ENCODE measurements at regions of chr17 and their contacts with region 1.

Region 1: GRCh38 chr17:65100316-65101140 is 36.6 kb upstream of the RGS9 start:
- DNase-seq: peak; percentile 91
- ATAC-seq: peak; percentile 70
- H3K4me3 ChIP-seq: peak overlapping the region; percentile 76
- H3K27ac ChIP-seq: peak overlapping the region; percentile 92
- H3K4me1 ChIP-seq: peaks cover 44% of the 10 kb centered on the region
- H3K27me3 ChIP-seq: no peaks in the 10 kb centered on the region
- CTCF ChIP-seq: peak; percentile 92

Region 2: GRCh38 chr17:64968652-64969501 is 131.7 kb before region 1 on chr17:
- CTCF ChIA-PET with region 1: interaction called, 6 read pairs
- POLR2A ChIA-PET with region 1: no interaction called
- intact Hi-C with region 1: loop called (anchors 1 kb)
- DNase-seq: no peak
- ATAC-seq: no peak
- H3K4me3 ChIP-seq: no peak overlapping the region
- H3K27ac ChIP-seq: no peak overlapping the region
- H3K4me1 ChIP-seq: peaks cover 24% of the 10 kb centered on the region
- H3K27me3 ChIP-seq: no peaks in the 10 kb centered on the region
- CTCF ChIP-seq: no peak

Region 3: DNA sequence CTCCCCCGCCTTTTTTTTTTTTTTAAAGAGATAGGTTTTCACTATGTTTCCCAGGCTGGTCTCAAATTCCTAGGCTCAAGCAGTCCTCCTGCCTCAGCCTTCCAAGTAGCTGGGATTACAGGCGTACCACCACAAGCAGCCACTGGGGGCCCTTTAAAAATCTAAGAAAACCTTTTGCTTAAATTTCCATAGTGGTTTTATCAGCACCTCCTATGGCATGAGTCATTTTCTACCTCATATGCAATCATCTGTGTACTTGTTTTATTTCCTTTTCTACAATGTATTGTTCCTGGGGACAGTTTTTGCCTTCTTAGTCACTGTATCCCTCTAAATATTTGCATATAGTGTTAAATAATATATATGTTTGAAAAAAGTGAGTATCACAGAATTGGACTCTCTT is 73.2 kb before region 1 on chr17:
- CTCF ChIA-PET with region 1: interaction called, 3 read pairs
- POLR2A ChIA-PET with region 1: no interaction called
- intact Hi-C with region 1: loop called (anchors 1 kb)
- DNase-seq: peak; percentile 96
- ATAC-seq: peak; percentile 83
- H3K4me3 ChIP-seq: no peak overlapping the region
- H3K27ac ChIP-seq: peak overlapping the region; percentile 81
- H3K4me1 ChIP-seq: peaks cover 37% of the 10 kb centered on the region
- H3K27me3 ChIP-seq: no peaks in the 10 kb centered on the region
- CTCF ChIP-seq: peak; percentile 68

Region 4: GRCh38 chr17:65122836-65123756 is 22.6 kb after region 1 on chr17:
- CTCF ChIA-PET with region 1: interaction called, 13 read pairs
- POLR2A ChIA-PET with region 1: interaction called, 20 read pairs
- intact Hi-C with region 1: loop called (anchors 1 kb)
- DNase-seq: peak; percentile 86
- ATAC-seq: peak; percentile 39
- H3K4me3 ChIP-seq: peak overlapping the region; percentile 50
- H3K27ac ChIP-seq: peak overlapping the region; percentile 91
- H3K4me1 ChIP-seq: peaks cover 33% of the 10 kb centered on the region
- H3K27me3 ChIP-seq: no peaks in the 10 kb centered on the region
- CTCF ChIP-seq: no peak

Region 5: DNA sequence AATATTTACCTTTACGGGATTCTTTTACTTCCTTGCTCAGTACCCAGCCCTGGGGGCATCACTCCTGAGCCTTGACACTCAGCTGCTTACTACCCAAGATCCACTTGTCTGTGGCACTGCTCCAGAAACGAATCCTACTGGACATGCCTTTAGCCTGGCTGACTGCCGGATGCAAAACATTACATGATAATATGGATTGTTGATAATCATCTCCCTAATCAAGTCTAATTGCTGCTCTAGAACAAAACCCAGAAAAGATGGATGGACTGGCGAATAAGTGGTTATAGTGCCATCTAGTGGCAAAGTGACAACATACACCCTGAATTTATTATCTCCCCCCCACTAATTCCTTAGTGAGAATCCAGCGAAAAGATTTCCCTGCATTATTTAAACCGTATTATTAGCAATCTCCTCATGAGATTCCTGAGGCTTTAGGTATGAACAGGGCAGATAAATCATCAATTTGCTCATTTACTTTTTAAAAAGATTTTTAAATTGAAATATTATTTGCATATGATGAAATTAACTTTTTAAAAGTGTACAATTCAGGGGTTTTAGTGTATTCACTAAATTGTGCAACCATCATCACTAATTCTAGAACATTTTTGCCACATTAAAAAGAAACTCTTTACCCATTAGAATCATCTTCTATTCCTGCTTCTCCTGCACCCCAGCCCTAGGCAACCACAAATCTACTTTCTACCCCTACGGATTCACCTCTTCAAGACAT is 98.3 kb after region 1 on chr17:
- CTCF ChIA-PET with region 1: no interaction called
- POLR2A ChIA-PET with region 1: no interaction called
- intact Hi-C with region 1: loop called (anchors 2 kb)
- DNase-seq: peak; percentile 84
- ATAC-seq: peak; percentile 64
- H3K4me3 ChIP-seq: no peak overlapping the region
- H3K27ac ChIP-seq: no peak overlapping the region
- H3K4me1 ChIP-seq: 0 out of 2 replicates have a peak, but pooled peaks cover 6% of the 10 kb centered on the region
- H3K27me3 ChIP-seq: no peaks in the 10 kb centered on the region
- CTCF ChIP-seq: peak; percentile 96

Region 6: DNA sequence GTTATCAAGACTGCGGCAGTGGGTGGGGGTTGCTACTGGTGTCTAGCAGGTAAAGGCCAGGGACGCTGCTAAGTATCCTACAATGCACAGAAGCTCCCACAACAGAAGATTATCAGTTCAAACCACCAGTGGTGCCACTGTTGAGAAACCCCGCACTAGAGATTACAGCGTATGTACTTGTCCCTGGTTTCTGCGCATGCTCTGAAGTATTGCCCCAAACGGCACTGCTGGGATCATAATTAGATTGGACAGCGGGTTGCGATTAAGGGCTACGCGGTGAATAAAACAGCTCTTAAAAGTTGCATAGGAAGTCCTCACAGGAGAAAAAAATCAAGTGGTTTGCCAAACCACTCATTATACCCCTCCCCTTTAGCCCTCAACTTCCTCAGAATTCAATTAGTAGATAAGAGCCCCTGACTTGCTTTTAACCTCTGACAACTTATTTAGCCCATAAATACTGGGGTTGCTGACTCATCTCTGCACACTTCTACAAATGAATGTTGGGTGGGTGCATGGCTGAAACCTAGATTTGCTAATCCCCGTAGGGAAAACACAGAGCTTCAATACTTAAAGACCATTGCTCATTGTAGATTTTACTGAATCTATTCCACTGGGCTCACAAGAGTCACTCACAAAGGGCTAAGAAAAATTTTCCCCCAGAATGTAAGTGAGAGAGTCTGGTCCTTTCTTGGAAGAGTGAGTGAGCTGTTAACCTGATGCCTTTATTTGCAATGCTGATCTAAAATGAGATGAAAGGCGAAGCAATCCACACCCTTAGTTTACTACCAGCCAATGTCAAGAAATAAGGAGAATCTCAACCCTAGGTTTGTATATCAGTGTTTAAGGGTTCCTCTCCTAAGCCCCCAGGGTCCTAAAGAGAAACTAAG is 128.4 kb after region 1 on chr17:
- CTCF ChIA-PET with region 1: no interaction called
- POLR2A ChIA-PET with region 1: no interaction called
- intact Hi-C with region 1: no loop called
- DNase-seq: peak; percentile 41
- ATAC-seq: no peak
- H3K4me3 ChIP-seq: no peak overlapping the region
- H3K27ac ChIP-seq: no peak overlapping the region
- H3K4me1 ChIP-seq: peaks cover 16% of the 10 kb centered on the region
- H3K27me3 ChIP-seq: no peaks in the 10 kb centered on the region
- CTCF ChIP-seq: no peak

Measured in PC-3 (cell line).